B cell (primary cell): ENCODE measurements at regions of chr21 and their contacts with region 1.

Region 1: DNA sequence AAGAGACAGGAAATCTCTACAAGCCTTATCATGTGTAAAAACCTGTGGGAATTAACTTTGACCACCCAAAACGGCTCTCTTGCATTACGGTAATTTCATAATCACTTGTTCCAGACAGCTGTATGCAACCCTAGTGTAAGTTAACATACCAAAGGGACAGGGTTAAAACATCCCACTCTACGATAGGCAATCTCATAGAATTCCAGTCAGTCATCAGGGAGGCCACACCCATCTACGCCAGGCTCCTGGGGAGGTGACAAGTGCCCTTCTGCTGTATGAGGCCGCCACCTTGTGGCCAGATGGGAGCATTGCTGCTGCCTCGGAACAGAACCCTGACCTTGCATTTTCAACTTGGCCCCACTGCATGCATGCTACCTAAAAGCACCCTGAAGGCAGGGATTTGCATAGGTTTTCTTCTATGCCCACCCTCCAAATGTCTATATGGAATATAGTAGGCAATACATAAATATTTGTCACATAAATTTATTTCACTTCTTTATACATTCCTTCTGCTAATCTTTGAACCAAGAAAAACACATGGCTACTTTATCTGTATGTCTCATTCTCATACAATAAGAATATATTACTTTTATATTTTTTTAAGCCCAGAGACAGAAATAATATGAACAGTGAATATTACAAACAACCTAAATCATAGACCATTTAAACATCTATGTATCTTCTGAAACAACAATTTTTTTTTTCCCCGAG is 12.6 kb downstream of the HSF2BP start:
- DNase-seq: peak; percentile 90
- ATAC-seq: peak; percentile 99
- H3K4me3 ChIP-seq: peak overlapping the region in 1 of 5 experiments; percentile 3
- H3K4me3 Mint-ChIP-seq: peak overlapping the region; percentile 74
- H3K27ac ChIP-seq: no peak overlapping the region
- H3K27ac Mint-ChIP-seq: peak overlapping the region; percentile 53
- H3K4me1 ChIP-seq: peaks cover 13 to 14% of the 10 kb centered on the region in 2 donors
- H3K4me1 Mint-ChIP-seq: peaks cover 17% of the 10 kb centered on the region
- H3K27me3 ChIP-seq: no peaks in the 10 kb centered on the region
- H3K27me3 Mint-ChIP-seq: peaks cover 16% of the 10 kb centered on the region
- CTCF ChIP-seq: peak; percentile 100

Region 2: GRCh38 chr21:43375827-43376805 is 270.6 kb before region 1 on chr21:
- CTCF ChIA-PET with region 1: no interaction called
- POLR2A ChIA-PET with region 1: no interaction called
- intact Hi-C with region 1: no loop called
- DNase-seq: no peak
- ATAC-seq: no peak
- H3K4me3 ChIP-seq: no peak overlapping the region
- H3K4me3 Mint-ChIP-seq: no peak overlapping the region
- H3K27ac ChIP-seq: no peak overlapping the region
- H3K27ac Mint-ChIP-seq: peak overlapping the region; percentile 32
- H3K4me1 ChIP-seq: peaks cover 0 to 7% of the 10 kb centered on the region in 2 donors
- H3K4me1 Mint-ChIP-seq: peaks cover 9% of the 10 kb centered on the region
- H3K27me3 ChIP-seq: no peaks in the 10 kb centered on the region
- H3K27me3 Mint-ChIP-seq: no peaks in the 10 kb centered on the region
- CTCF ChIP-seq: no peak

Region 3: GRCh38 chr21:43611598-43612369 is 34.9 kb before region 1 on chr21:
- CTCF ChIA-PET with region 1: interaction called, 23 read pairs
- POLR2A ChIA-PET with region 1: no interaction called
- intact Hi-C with region 1: loop called (anchors 1 kb)
- DNase-seq: peak; percentile 53
- ATAC-seq: peak; percentile 68
- H3K4me3 ChIP-seq: no peak overlapping the region
- H3K4me3 Mint-ChIP-seq: no peak overlapping the region
- H3K27ac ChIP-seq: no peak overlapping the region
- H3K27ac Mint-ChIP-seq: no peak overlapping the region
- H3K4me1 ChIP-seq: no peaks in the 10 kb centered on the region
- H3K4me1 Mint-ChIP-seq: peaks cover 11% of the 10 kb centered on the region
- H3K27me3 ChIP-seq: peaks cover 0 to 3% (median 0%) of the 10 kb centered on the region in 4 experiments
- H3K27me3 Mint-ChIP-seq: no peaks in the 10 kb centered on the region
- CTCF ChIP-seq: peak; percentile 59

Region 4: GRCh38 chr21:43619856-43620255 is 26.8 kb before region 1 on chr21:
- CTCF ChIA-PET with region 1: interaction called, 10 read pairs
- POLR2A ChIA-PET with region 1: no interaction called
- intact Hi-C with region 1: no loop called
- DNase-seq: no peak
- ATAC-seq: no peak
- H3K4me3 ChIP-seq: no peak overlapping the region
- H3K4me3 Mint-ChIP-seq: no peak overlapping the region
- H3K27ac ChIP-seq: no peak overlapping the region
- H3K27ac Mint-ChIP-seq: no peak overlapping the region
- H3K4me1 ChIP-seq: peaks cover 5% of the 10 kb centered on the region in 2 donors
- H3K4me1 Mint-ChIP-seq: peaks cover 20% of the 10 kb centered on the region
- H3K27me3 ChIP-seq: no peaks in the 10 kb centered on the region
- H3K27me3 Mint-ChIP-seq: peaks cover 5% of the 10 kb centered on the region
- CTCF ChIP-seq: no peak

Region 5: GRCh38 chr21:43634618-43635017 is 12.1 kb before region 1 on chr21:
- CTCF ChIA-PET with region 1: interaction called, 11 read pairs
- POLR2A ChIA-PET with region 1: no interaction called
- intact Hi-C with region 1: no loop called
- DNase-seq: no peak
- ATAC-seq: no peak
- H3K4me3 ChIP-seq: no peak overlapping the region
- H3K4me3 Mint-ChIP-seq: no peak overlapping the region
- H3K27ac ChIP-seq: no peak overlapping the region
- H3K27ac Mint-ChIP-seq: no peak overlapping the region
- H3K4me1 ChIP-seq: no peaks in the 10 kb centered on the region
- H3K4me1 Mint-ChIP-seq: no peaks in the 10 kb centered on the region
- H3K27me3 ChIP-seq: no peaks in the 10 kb centered on the region
- H3K27me3 Mint-ChIP-seq: peaks cover 6% of the 10 kb centered on the region
- CTCF ChIP-seq: no peak

Region 6: DNA sequence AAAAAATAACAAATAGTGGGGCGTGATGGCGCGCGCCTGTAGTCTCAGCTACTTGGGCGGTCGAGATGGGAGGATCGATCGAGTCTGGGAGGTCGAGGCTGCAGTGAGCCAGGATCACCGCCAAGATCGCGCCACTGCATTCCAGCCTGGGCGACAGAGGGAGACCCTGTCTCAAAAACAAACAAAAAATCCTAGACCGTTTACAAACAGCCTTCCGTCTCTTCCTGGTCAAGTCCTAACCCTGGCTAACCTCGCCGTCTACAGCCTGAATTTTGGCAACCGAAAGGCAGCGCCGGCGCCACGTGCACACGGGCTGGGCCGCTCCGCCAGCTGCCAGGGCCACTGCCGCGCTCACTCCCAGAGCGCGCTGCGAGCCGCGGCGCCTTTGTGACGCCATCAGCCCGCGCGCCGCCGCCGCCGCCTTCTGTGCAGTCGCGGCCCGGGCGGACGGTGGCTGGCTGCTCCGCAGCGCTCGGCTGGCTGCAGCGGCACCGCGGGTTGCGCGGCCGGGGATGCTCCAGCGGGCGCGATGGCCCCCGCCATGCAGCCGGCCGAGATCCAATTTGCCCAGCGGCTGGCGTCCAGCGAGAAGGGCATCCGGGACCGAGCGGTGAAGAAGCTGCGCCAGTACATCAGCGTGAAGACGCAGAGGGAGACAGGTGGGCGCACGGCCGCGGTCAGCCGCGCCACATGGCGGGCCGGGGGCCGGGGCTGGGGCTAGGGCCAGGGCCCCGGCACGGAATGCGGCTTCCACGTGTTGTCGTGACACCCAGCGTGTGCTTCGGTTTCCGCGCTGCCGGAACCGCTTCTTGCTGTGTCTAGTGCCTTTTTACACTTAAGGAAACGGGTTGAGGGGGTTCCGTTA is 12.7 kb after region 1 on chr21 and contains the starts of genes HSF2BP and RRP1B:
- CTCF ChIA-PET with region 1: interaction called, 7 read pairs
- POLR2A ChIA-PET with region 1: no interaction called
- intact Hi-C with region 1: loop called (anchors 1 kb)
- DNase-seq: peak; percentile 90
- ATAC-seq: peak; percentile 93
- H3K4me3 ChIP-seq: peak within 1 kb of the TSS; percentile 72 to 94 (median 79)
- H3K4me3 Mint-ChIP-seq: peak within 1 kb of the TSS; percentile 95
- H3K27ac ChIP-seq: peak within 1 kb of the TSS; percentile 69 to 76
- H3K27ac Mint-ChIP-seq: peak within 1 kb of the TSS; percentile 94
- H3K4me1 ChIP-seq: peaks cover 28 to 29% of the 10 kb centered on the region in 2 donors
- H3K4me1 Mint-ChIP-seq: peaks cover 33% of the 10 kb centered on the region
- H3K27me3 ChIP-seq: no peaks in the 10 kb centered on the region
- H3K27me3 Mint-ChIP-seq: no peaks in the 10 kb centered on the region
- CTCF ChIP-seq: no peak
- total RNA-seq, gene HSF2BP: 0.49 and 0.83 TPM in 2 replicates
- total RNA-seq, gene RRP1B: 22.4 and 22.7 TPM in 2 replicates

Region 7: DNA sequence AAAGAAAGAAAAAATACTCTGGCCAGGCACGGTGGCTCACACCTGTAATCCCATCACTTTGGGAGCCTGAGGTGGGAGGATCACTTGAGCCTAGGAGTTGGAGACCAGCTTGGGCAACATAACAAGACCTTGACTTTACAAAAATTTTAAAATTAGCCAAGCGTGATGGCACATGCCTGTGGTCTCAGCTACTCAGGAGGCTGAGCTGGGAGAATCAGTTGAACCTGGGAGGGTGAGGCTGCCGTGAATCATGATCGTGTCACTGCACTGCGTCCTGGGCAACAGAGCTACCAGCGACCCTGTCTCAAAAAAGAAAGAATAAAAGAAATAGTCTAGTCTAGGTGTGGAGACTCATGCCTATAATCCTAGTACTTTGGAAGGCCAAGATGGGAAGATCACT is 34.9 kb after region 1 on chr21:
- CTCF ChIA-PET with region 1: no interaction called
- POLR2A ChIA-PET with region 1: no interaction called
- intact Hi-C with region 1: no loop called
- DNase-seq: peak; percentile 2
- ATAC-seq: no peak
- H3K4me3 ChIP-seq: no peak overlapping the region
- H3K4me3 Mint-ChIP-seq: no peak overlapping the region
- H3K27ac ChIP-seq: no peak overlapping the region
- H3K27ac Mint-ChIP-seq: no peak overlapping the region
- H3K4me1 ChIP-seq: no peaks in the 10 kb centered on the region
- H3K4me1 Mint-ChIP-seq: no peaks in the 10 kb centered on the region
- H3K27me3 ChIP-seq: no peaks in the 10 kb centered on the region
- H3K27me3 Mint-ChIP-seq: no peaks in the 10 kb centered on the region
- CTCF ChIP-seq: no peak

Region 8: DNA sequence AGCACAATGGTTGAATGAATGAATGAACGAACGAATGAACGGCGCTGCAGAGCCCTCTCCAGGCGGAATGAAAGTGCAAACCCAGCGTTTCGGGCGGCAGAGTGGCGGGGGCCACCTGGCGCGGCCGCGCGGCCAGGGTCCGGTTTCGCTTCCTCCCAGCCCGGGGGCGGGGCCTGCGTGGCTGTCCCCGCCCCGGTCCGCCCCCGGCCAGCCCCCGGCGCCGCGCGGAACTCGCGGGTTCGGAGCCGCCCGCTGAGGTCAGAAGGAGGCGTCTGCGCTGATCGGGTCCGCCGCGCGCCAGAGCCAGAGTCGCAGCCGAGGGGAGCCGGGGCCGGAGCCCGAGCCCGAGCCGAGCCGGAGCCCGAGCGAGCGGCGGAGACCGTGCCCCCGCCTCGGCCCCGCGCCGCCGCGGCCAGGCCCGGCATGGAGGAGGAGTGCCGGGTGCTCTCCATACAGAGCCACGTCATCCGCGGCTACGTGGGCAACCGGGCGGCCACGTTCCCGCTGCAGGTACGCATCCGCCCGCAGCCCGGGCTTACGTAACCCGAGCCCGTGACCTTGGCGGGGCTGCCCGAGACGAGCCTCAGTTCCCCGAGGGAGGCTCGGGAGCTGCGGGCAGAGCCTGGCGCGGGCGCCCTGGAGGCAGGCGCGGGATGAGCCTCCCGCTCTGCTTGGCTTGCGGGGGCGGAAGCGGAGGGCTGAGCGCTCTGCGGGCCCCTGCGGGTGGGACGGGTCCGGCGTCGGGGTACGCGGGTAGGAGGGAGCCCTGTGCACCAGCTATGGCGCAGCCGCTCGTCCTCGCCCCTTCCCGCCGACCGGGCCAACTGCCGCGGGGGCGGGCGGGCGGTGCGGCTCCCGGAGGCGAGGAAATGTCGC is 72.4 kb after region 1 on chr21 and contains the start of gene PDXK:
- CTCF ChIA-PET with region 1: interaction called, 4 read pairs
- POLR2A ChIA-PET with region 1: no interaction called
- intact Hi-C with region 1: loop called (anchors 2 kb)
- DNase-seq: peak; percentile 95
- ATAC-seq: peak; percentile 85
- H3K4me3 ChIP-seq: peak within 1 kb of the TSS; percentile 13 to 88 (median 75)
- H3K4me3 Mint-ChIP-seq: peak within 1 kb of the TSS; percentile 86
- H3K27ac ChIP-seq: peak within 1 kb of the TSS; percentile 55 to 87
- H3K27ac Mint-ChIP-seq: peak within 1 kb of the TSS; percentile 81
- H3K4me1 ChIP-seq: peaks cover 35 to 56% of the 10 kb centered on the region in 2 donors
- H3K4me1 Mint-ChIP-seq: peaks cover 53% of the 10 kb centered on the region
- H3K27me3 ChIP-seq: peaks cover 0 to 23% (median 4%) of the 10 kb centered on the region in 4 experiments
- H3K27me3 Mint-ChIP-seq: no peaks in the 10 kb centered on the region
- CTCF ChIP-seq: peak; percentile 36
- total RNA-seq, gene PDXK: 102 and 108 TPM in 2 replicates

Region 9: GRCh38 chr21:43810505-43811261 is 164.0 kb after region 1 on chr21:
- CTCF ChIA-PET with region 1: no interaction called
- POLR2A ChIA-PET with region 1: no interaction called
- intact Hi-C with region 1: no loop called
- DNase-seq: peak; percentile 84
- ATAC-seq: peak; percentile 97
- H3K4me3 ChIP-seq: no peak overlapping the region
- H3K4me3 Mint-ChIP-seq: no peak overlapping the region
- H3K27ac ChIP-seq: no peak overlapping the region
- H3K27ac Mint-ChIP-seq: peak overlapping the region; percentile 56
- H3K4me1 ChIP-seq: peaks cover 21 to 33% of the 10 kb centered on the region in 2 donors
- H3K4me1 Mint-ChIP-seq: peaks cover 28% of the 10 kb centered on the region
- H3K27me3 ChIP-seq: peaks cover 0 to 25% (median 5%) of the 10 kb centered on the region in 4 experiments
- H3K27me3 Mint-ChIP-seq: peaks cover 7% of the 10 kb centered on the region
- CTCF ChIP-seq: peak; percentile 83

Region 10: GRCh38 chr21:43866260-43866629 is 219.5 kb after region 1 on chr21:
- CTCF ChIA-PET with region 1: no interaction called
- POLR2A ChIA-PET with region 1: no interaction called
- intact Hi-C with region 1: no loop called
- DNase-seq: peak; percentile 51
- ATAC-seq: peak; percentile 16
- H3K4me3 ChIP-seq: peak overlapping the region; percentile 32 to 78 (median 65)
- H3K4me3 Mint-ChIP-seq: peak overlapping the region; percentile 78
- H3K27ac ChIP-seq: peak overlapping the region; percentile 11 to 64
- H3K27ac Mint-ChIP-seq: peak overlapping the region; percentile 72
- H3K4me1 ChIP-seq: peaks cover 13 to 33% of the 10 kb centered on the region in 2 donors
- H3K4me1 Mint-ChIP-seq: peaks cover 41% of the 10 kb centered on the region
- H3K27me3 ChIP-seq: no peaks in the 10 kb centered on the region
- H3K27me3 Mint-ChIP-seq: no peaks in the 10 kb centered on the region
- CTCF ChIP-seq: no peak